ENCODE measurements at regions of chr15 and their contacts with region 1.

Region 1: DNA sequence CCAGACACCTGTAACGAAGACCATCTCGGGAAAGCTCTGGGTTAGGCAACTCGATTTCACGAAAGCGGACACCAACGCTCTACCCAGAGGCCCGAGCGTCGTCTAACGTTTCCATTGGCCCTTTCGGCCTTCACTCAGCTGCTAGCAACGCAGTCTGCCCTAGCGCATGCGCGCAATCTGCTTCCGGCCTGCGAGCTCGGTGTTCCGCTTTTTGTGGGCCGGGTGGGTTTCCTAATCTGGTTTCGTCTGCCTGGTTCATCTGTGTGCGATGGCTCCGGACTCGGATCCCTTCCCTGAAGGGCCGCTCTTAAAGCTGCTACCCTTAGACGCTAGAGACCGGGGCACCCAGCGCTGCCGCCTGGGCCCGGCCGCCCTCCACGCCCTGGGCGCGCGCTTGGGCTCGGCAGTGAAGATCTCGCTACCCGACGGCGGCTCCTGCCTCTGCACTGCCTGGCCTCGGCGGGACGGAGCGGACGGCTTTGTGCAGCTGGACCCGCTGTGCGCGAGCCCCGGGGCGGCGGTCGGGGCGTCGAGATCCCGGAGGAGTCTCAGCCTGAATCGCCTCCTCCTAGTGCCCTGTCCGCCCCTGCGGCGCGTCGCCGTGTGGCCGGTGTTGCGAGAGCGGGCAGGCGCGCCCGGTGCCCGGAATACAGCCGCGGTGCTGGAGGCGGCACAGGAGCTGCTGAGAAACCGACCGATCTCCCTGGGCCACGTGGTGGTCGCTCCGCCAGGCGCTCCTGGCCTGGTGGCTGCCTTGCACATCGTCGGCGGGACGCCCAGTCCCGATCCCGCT is 24.0 kb upstream of the GATM start:
- DNase-seq: peak; percentile 92 to 98 (median 96)
- ATAC-seq: peak; percentile 92 to 96 (median 94)
- H3K4me3 ChIP-seq: peak overlapping the region; percentile 90 to 96
- H3K4me3 Mint-ChIP-seq: peak overlapping the region; percentile 87 to 96 (median 95)
- H3K27ac ChIP-seq: peak overlapping the region; percentile 93
- H3K27ac Mint-ChIP-seq: peak overlapping the region; percentile 97 to 100
- H3K4me1 ChIP-seq: peaks cover 16 to 17% of the 10 kb centered on the region in 2 experiments
- H3K4me1 Mint-ChIP-seq: peaks cover 29 to 47% (median 37%) of the 10 kb centered on the region in 3 donors
- H3K27me3 ChIP-seq: no peaks in the 10 kb centered on the region
- H3K27me3 Mint-ChIP-seq: no peaks in the 10 kb centered on the region

Region 2: GRCh38 chr15:44536962-44537734 is 865.2 kb before region 1 on chr15 and contains the start of gene EIF3J:
- CTCF ChIA-PET with region 1: no interaction called
- POLR2A ChIA-PET with region 1: no interaction called
- DNase-seq: peak; percentile 85 to 98 (median 92)
- ATAC-seq: peak; percentile 90 to 95 (median 92)
- H3K4me3 ChIP-seq: peak within 1 kb of the TSS; percentile 90 to 91
- H3K4me3 Mint-ChIP-seq: peak within 1 kb of the TSS; percentile 83 to 92 (median 85)
- H3K27ac ChIP-seq: peak within 1 kb of the TSS; percentile 81
- H3K27ac Mint-ChIP-seq: peak within 1 kb of the TSS; percentile 88 to 91
- H3K4me1 ChIP-seq: peaks cover 17 to 27% of the 10 kb centered on the region in 2 experiments
- H3K4me1 Mint-ChIP-seq: peaks cover 54 to 58% (median 55%) of the 10 kb centered on the region in 3 donors
- H3K27me3 ChIP-seq: no peaks in the 10 kb centered on the region
- H3K27me3 Mint-ChIP-seq: no peaks in the 10 kb centered on the region
- total RNA-seq, gene EIF3J: 58.2 to 68.3 (median 64.4) TPM

Region 3: DNA sequence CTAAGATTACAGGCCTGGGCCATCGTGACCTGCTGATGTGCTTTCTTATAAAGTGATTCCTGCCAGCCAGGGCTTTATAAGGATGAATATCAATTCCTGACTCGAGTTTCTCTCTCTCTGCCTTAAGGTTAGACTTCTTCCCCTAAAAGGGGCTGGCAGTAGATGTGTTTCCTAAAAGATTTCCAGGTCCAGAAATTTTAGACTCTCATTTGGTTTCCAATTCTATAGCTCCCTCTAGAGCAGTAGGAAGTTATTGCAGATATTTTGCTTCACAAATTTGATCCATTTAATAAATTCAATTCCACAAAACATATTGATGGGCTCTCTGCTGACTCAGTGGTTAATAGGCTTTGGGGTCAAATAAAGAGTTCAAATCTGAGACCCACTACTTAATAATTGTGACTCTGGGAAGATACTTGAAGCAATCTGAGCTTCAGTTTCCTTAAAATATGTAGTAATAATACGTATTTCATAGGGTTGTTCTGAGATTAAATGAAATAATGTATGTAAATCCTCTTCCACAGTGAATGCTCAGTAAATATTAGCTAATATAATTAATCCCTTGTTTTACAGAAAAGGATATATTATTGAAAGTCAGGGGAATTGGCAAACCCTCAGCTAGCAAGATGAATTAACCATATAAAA is 663.9 kb before region 1 on chr15:
- CTCF ChIA-PET with region 1: no interaction called
- POLR2A ChIA-PET with region 1: interaction called in 1 of 2 experiments, 11 read pairs
- DNase-seq: peak in 1 of 35 experiments; percentile 74
- ATAC-seq: no peak
- H3K4me3 ChIP-seq: no peak overlapping the region
- H3K4me3 Mint-ChIP-seq: peak overlapping the region in 2 of 3 donors; percentile 14 to 51
- H3K27ac ChIP-seq: peak overlapping the region; percentile 89
- H3K27ac Mint-ChIP-seq: peak overlapping the region; percentile 80 to 84
- H3K4me1 ChIP-seq: peaks cover 7 to 43% of the 10 kb centered on the region in 2 experiments
- H3K4me1 Mint-ChIP-seq: peaks cover 55 to 59% (median 58%) of the 10 kb centered on the region in 3 donors
- H3K27me3 ChIP-seq: no peaks in the 10 kb centered on the region
- H3K27me3 Mint-ChIP-seq: no peaks in the 10 kb centered on the region

Region 4: DNA sequence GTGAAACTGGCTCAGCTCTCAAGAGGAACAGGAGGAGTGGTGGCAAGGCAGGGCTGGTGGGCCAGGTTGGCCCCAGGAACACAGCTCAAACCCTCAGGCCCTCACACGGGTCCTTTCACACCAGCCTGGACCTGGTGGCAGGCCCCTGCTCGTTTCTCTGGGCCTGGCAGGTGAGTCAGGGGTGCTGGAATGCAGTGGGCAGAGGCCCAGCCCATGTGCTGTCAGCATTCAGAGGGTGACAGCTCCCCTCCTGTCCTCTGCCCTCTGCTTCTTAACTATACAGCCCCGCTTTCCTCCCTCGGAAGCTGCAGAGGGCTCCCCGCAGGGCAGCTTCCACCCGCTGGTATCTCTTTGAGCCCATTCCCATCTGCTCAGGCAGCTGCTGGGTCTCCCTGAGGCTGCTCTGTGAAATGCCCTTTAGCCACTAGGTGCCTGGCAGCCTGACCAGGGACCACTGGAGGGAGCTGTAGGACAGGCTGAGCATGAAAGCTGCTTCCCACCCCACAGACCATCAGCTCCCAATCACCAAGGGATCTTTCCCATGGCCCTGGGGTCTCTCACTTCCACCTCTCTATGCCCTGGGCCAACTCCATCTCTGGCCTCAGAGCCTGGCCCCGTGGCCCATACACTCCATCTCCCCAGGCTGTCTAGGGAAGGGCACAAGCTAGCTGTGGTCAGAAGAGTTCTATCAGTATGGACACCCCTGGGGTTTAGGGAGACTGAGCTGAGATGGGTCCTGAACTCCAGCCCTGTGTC is 239.4 kb before region 1 on chr15:
- CTCF ChIA-PET with region 1: interaction called, 10 to 17 read pairs
- POLR2A ChIA-PET with region 1: interaction called in 1 of 2 experiments, 3 read pairs
- DNase-seq: peak in 34 of 35 experiments; percentile 11 to 73 (median 45)
- ATAC-seq: peak in 1 of 4 experiments; percentile 15
- H3K4me3 ChIP-seq: no peak overlapping the region
- H3K4me3 Mint-ChIP-seq: no peak overlapping the region
- H3K27ac ChIP-seq: no peak overlapping the region
- H3K27ac Mint-ChIP-seq: no peak overlapping the region
- H3K4me1 ChIP-seq: peaks cover 2 to 30% of the 10 kb centered on the region in 2 experiments
- H3K4me1 Mint-ChIP-seq: peaks cover 12 to 25% (median 22%) of the 10 kb centered on the region in 3 donors
- H3K27me3 ChIP-seq: no peaks in the 10 kb centered on the region
- H3K27me3 Mint-ChIP-seq: no peaks in the 10 kb centered on the region

Region 5: DNA sequence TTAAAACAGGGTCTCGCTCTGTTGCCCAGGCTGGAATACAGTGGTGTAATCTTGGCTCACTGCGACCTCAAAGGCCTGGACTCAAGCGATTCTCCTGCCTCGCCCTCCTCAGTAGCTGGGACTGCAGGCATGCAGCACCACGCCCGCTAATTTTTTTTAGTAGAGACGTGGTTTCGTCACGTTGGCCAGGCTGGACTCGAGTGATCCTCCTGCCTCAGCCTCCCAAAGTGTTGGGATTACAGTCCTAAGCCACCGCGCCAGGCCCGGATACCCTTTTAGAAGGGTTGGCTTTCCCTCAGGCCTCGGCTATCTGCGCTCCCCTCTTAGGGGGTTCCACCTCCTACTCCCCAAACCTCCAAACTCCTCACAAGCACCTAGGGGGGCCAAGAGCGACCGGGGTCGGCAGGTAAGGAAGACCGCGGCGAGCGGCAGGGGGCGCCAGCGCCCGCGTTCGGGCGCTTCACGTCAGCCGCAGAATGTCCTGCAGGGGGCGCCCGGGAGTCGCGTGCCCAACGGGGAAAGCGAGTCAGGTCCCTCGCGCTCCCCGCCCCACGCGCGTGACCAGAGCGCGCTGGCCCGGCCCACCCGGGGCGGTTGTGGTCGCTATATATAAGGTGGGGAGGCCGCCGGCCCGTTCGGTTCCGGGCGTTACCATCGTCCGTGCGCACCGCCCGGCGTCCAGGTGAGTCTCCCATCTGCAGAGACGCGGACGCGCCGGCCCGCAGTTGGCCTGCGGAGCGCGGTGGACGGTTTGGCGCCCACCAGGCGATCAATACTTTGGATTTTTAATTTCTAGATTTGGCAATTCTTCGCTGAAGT is 27.8 kb after region 1 on chr15:
- CTCF ChIA-PET with region 1: interaction called, 7 to 13 read pairs
- POLR2A ChIA-PET with region 1: no interaction called
- DNase-seq: peak; percentile 48 to 92 (median 80)
- ATAC-seq: peak; percentile 93 to 96 (median 94)
- H3K4me3 ChIP-seq: peak overlapping the region; percentile 29 to 71
- H3K4me3 Mint-ChIP-seq: peak overlapping the region; percentile 13 to 56 (median 49)
- H3K27ac ChIP-seq: no peak overlapping the region
- H3K27ac Mint-ChIP-seq: no peak overlapping the region
- H3K4me1 ChIP-seq: peaks cover 0 to 11% of the 10 kb centered on the region in 2 experiments
- H3K4me1 Mint-ChIP-seq: peaks cover 0 to 5% (median 2%) of the 10 kb centered on the region in 3 donors
- H3K27me3 ChIP-seq: peaks cover 0 to 8% of the 10 kb centered on the region in 2 experiments
- H3K27me3 Mint-ChIP-seq: peaks cover 3 to 8% of the 10 kb centered on the region in 2 donors

Region 6: DNA sequence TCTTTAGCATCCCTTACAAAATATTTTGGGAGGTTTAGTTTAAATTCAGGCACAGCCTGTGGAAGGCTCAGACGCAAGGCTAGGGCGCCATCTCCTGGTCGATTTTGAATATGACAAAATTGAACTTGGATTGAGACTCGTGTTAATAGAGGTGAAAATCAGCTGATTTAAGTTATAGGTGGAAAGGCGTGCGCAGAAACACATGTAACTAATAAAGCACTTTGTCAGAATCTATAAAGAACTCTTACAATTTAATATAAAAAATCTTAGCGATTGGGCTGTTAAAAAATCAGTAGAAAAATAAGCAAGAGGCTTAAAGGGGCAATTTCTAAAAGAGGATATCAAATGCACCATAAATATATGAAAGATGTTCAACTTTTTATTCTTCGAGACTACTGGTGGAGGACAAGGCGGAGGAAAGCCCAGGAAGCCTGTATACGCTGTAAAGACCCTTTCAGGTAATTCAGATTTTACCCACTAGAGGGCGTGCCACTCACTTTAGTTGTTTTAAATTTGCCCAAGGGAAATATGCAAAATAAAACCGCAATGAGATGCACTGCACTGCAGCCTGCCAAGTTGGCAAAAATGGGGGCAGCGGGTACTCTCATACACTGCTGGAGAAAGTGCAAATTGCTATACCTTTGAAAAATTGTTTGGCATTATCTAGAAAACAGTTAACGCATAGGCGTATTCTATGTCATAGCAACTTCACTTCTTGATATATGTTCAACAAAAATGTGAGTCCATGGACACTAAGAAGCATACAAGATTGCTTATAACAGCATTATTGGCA is 55.5 kb after region 1 on chr15:
- CTCF ChIA-PET with region 1: interaction called, 10 to 15 read pairs
- POLR2A ChIA-PET with region 1: interaction called in 1 of 2 experiments, 3 read pairs
- DNase-seq: peak; percentile 35 to 92 (median 63)
- ATAC-seq: peak; percentile 68 to 81 (median 70)
- H3K4me3 ChIP-seq: peak overlapping the region; percentile 41 to 78
- H3K4me3 Mint-ChIP-seq: peak overlapping the region; percentile 78 to 90 (median 88)
- H3K27ac ChIP-seq: peak overlapping the region; percentile 63
- H3K27ac Mint-ChIP-seq: peak overlapping the region; percentile 85 to 94
- H3K4me1 ChIP-seq: peaks cover 16 to 40% of the 10 kb centered on the region in 2 experiments
- H3K4me1 Mint-ChIP-seq: peaks cover 40 to 48% (median 41%) of the 10 kb centered on the region in 3 donors
- H3K27me3 ChIP-seq: no peaks in the 10 kb centered on the region
- H3K27me3 Mint-ChIP-seq: no peaks in the 10 kb centered on the region

Measured in T-cell (primary cell).